ENCODE measurements at regions of chr10 and their contacts with region 1.

Region 1: GRCh38 chr10:1045415-1045814 is 3.5 kb downstream of the IDI1 start:
- DNase-seq: no peak
- ATAC-seq: no peak
- H3K4me3 ChIP-seq: no peak overlapping the region
- H3K27ac ChIP-seq: no peak overlapping the region
- H3K4me1 ChIP-seq: peaks cover 14% of the 10 kb centered on the region
- H3K27me3 ChIP-seq: no peaks in the 10 kb centered on the region
- CTCF ChIP-seq: no peak

Region 2: GRCh38 chr10:1094112-1095057 is 49.0 kb after region 1 on chr10:
- CTCF ChIA-PET with region 1: no interaction called
- POLR2A ChIA-PET with region 1: no interaction called
- in situ Hi-C with region 1: no loop called
- intact Hi-C with region 1: no loop called
- DNase-seq: no peak
- ATAC-seq: no peak
- H3K4me3 ChIP-seq: no peak overlapping the region
- H3K27ac ChIP-seq: no peak overlapping the region
- H3K4me1 ChIP-seq: no peaks in the 10 kb centered on the region
- H3K27me3 ChIP-seq: no peaks in the 10 kb centered on the region
- CTCF ChIP-seq: no peak

Region 3: DNA sequence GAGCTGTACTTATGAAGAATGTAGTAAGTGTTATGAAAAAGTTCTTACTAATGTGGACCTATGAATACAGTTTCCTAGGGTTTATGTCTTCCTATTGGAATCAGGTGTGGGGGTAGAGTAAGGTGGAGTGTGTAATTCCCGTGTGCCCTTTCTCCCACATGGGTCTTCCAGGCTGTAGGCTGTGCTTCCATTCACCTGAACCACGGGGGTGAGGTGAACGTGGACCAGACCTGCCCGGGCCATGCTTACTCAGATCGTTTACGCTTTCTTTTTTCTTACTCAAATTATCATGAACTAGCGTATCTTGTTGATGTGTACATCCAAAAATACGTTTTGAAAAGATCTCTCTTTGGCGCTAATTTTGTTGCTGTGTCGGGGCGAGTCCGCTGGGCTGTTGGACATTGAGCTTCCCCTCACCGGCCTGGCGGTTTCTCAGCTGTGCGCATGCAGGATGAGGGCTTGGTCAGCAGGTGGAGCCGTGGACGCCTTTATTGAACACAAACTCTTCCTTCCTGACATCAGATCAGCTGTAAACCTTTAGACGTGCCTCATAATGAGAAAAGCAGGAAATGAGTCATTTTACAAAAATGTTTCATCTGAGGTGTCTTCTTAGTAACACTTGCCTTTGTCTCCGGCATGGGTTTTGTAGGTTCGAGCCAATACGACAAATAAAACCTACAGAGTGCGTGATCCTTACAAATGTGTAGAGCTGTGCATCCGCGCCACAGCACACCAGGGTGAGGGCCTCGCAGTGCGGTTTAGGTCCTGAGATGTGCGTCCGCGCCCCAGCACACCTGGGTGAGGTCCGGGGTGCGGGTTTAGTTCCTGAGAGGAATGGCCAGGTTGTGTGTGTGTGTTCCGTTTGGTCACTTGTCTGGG is 64.6 kb after region 1 on chr10:
- CTCF ChIA-PET with region 1: no interaction called
- POLR2A ChIA-PET with region 1: interaction called, 14 read pairs
- in situ Hi-C with region 1: no loop called
- intact Hi-C with region 1: no loop called
- DNase-seq: peak; percentile 61
- ATAC-seq: peak; percentile 90
- H3K4me3 ChIP-seq: no peak overlapping the region
- H3K27ac ChIP-seq: no peak overlapping the region
- H3K4me1 ChIP-seq: no peaks in the 10 kb centered on the region
- H3K27me3 ChIP-seq: no peaks in the 10 kb centered on the region
- CTCF ChIP-seq: peak; percentile 81

Measured in Panc1 (cell line).